Keratinocyte (primary cell): ENCODE measurements at regions of chr12 and their contacts with region 1.

Region 1: DNA sequence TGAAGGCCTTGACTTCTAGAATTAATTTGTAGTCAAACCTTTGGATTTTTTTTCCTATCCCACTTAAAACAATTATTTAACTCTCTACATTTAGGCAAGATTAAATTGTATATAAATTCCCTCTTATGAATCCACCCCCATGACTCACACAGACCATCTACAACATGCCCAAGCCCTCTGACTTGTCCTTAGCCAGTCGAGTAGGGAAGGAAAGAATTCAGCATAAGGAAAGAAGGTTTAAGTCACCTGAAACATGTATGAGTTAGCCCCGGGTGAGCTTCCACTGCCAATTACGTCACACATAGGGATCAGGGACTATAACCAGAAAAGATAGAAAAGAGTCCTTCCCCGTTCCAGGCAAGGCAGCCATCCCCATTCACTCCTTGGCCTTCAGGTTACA is 14.9 kb upstream of the RESF1 start:
- DNase-seq: no peak
- H3K4me3 ChIP-seq: no peak overlapping the region
- H3K27ac ChIP-seq: no peak overlapping the region
- H3K4me1 ChIP-seq: peaks cover 5% of the 10 kb centered on the region
- H3K27me3 ChIP-seq: no peaks in the 10 kb centered on the region
- CTCF ChIP-seq: no peak

Region 2: GRCh38 chr12:31896514-31897039 is 47.7 kb before region 1 on chr12:
- dilution Hi-C with region 1: loop called (anchors 10 kb)
- DNase-seq: no peak
- H3K4me3 ChIP-seq: no peak overlapping the region
- H3K27ac ChIP-seq: no peak overlapping the region
- H3K4me1 ChIP-seq: no peaks in the 10 kb centered on the region
- H3K27me3 ChIP-seq: no peaks in the 10 kb centered on the region
- CTCF ChIP-seq: no peak